ENCODE measurements at regions of chr2 and their contacts with region 1.

Region 1: GRCh38 chr2:131492418-131493198 is 411 bp upstream of the MZT2A start:
- DNase-seq: peak; percentile 92 to 97 (median 95)
- H3K4me3 ChIP-seq: peak overlapping the region; percentile 21 to 99 (median 56)
- H3K27ac ChIP-seq: peak overlapping the region; percentile 62 to 98 (median 87)
- H3K4me1 ChIP-seq: peaks cover 14 to 18% of the 10 kb centered on the region in 2 donors
- H3K27me3 ChIP-seq: no peaks in the 10 kb centered on the region
- CTCF ChIP-seq: peak; percentile 57 to 92 (median 77)
- POLR2A ChIP-seq: peak in 1 of 2 donors; percentile 55

Region 2: DNA sequence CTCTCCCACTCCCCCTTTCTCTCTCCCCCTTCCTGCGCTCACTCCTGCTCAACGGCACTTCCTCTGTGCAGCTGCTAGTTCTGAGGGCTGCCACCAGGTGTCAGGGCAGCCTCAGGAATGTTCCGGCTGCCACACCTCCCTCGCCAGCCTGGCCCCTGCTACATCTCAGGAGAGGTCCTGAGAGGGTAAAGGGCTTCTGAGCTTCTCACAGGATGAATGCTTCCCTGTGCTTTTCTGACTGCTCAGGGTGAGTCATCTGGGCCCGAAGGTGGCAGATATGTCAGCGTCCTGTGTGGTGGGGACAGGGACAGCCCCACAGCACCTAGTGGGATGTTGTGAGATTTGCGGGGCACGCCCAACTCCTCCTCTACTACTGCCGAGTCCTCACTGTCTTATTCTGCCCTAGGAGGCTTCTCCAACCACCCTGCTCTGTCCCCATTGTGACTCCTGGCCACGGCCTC is 338.5 kb before region 1 on chr2:
- intact Hi-C with region 1: loop called in 1 of 2 experiments (anchors 10 kb)
- DNase-seq: peak; percentile 39 to 76 (median 59)
- H3K4me3 ChIP-seq: no peak overlapping the region
- H3K27ac ChIP-seq: no peak overlapping the region
- H3K4me1 ChIP-seq: no peaks in the 10 kb centered on the region
- H3K27me3 ChIP-seq: no peaks in the 10 kb centered on the region
- CTCF ChIP-seq: peak; percentile 77 to 95 (median 88)
- POLR2A ChIP-seq: no peak

Region 3: GRCh38 chr2:131349021-131349420 is 143.6 kb before region 1 on chr2:
- intact Hi-C with region 1: no loop called
- DNase-seq: no peak
- H3K4me3 ChIP-seq: no peak overlapping the region
- H3K27ac ChIP-seq: no peak overlapping the region
- H3K4me1 ChIP-seq: no peaks in the 10 kb centered on the region
- H3K27me3 ChIP-seq: no peaks in the 10 kb centered on the region
- CTCF ChIP-seq: no peak
- POLR2A ChIP-seq: no peak

Region 4: GRCh38 chr2:131413148-131413747 is 79.4 kb before region 1 on chr2:
- intact Hi-C with region 1: loop called in 1 of 2 experiments (anchors 10 kb)
- DNase-seq: peak in 5 of 7 donors; percentile 25 to 59 (median 38)
- H3K4me3 ChIP-seq: no peak overlapping the region
- H3K27ac ChIP-seq: no peak overlapping the region
- H3K4me1 ChIP-seq: no peaks in the 10 kb centered on the region
- H3K27me3 ChIP-seq: peaks cover 9% of the 10 kb centered on the region
- CTCF ChIP-seq: peak; percentile 75 to 91 (median 86)
- POLR2A ChIP-seq: no peak

Region 5: GRCh38 chr2:131673392-131674173 is 181.0 kb after region 1 on chr2:
- intact Hi-C with region 1: loop called in 1 of 2 experiments (anchors 5 kb)
- DNase-seq: peak; percentile 81 to 92 (median 87)
- H3K4me3 ChIP-seq: peak overlapping the region in 1 of 4 donors; percentile 48
- H3K27ac ChIP-seq: no peak overlapping the region
- H3K4me1 ChIP-seq: peaks cover 22 to 30% of the 10 kb centered on the region in 2 donors
- H3K27me3 ChIP-seq: no peaks in the 10 kb centered on the region
- CTCF ChIP-seq: peak; percentile 72 to 94 (median 88)
- POLR2A ChIP-seq: no peak